Activated CD4-positive, alpha-beta T cell treated with anti-CD3 and anti-CD28 coated beads for 36 hours (primary cell): ENCODE measurements at regions of chr12 and their contacts with region 1.

Region 1: GRCh38 chr12:110280779-110281548 is at the start of gene ATP2A2:
- DNase-seq: peak; percentile 94
- ATAC-seq: peak; percentile 87
- H3K4me3 Mint-ChIP-seq: peak within 1 kb of the TSS; percentile 85
- H3K27ac Mint-ChIP-seq: peak within 1 kb of the TSS; percentile 86
- H3K4me1 Mint-ChIP-seq: peaks cover 40% of the 10 kb centered on the region
- H3K27me3 Mint-ChIP-seq: peaks cover 3% of the 10 kb centered on the region
- total RNA-seq, gene ATP2A2: 116 to 130 TPM

Region 2: GRCh38 chr12:109573029-109573913 is 707.7 kb before region 1 on chr12 and contains the starts of genes MMAB and MVK:
- CTCF ChIA-PET with region 1: no interaction called
- POLR2A ChIA-PET with region 1: no interaction called
- intact Hi-C with region 1: loop called in 1 of 2 experiments (anchors 2 kb)
- DNase-seq: peak; percentile 99
- ATAC-seq: peak; percentile 97
- H3K4me3 Mint-ChIP-seq: peak within 1 kb of the TSS; percentile 90
- H3K27ac Mint-ChIP-seq: peak within 1 kb of the TSS; percentile 96
- H3K4me1 Mint-ChIP-seq: peaks cover 23% of the 10 kb centered on the region
- H3K27me3 Mint-ChIP-seq: no peaks in the 10 kb centered on the region
- total RNA-seq, gene MMAB: 37.7 to 44.3 TPM
- total RNA-seq, gene MVK: 17.8 to 18.7 TPM

Region 3: DNA sequence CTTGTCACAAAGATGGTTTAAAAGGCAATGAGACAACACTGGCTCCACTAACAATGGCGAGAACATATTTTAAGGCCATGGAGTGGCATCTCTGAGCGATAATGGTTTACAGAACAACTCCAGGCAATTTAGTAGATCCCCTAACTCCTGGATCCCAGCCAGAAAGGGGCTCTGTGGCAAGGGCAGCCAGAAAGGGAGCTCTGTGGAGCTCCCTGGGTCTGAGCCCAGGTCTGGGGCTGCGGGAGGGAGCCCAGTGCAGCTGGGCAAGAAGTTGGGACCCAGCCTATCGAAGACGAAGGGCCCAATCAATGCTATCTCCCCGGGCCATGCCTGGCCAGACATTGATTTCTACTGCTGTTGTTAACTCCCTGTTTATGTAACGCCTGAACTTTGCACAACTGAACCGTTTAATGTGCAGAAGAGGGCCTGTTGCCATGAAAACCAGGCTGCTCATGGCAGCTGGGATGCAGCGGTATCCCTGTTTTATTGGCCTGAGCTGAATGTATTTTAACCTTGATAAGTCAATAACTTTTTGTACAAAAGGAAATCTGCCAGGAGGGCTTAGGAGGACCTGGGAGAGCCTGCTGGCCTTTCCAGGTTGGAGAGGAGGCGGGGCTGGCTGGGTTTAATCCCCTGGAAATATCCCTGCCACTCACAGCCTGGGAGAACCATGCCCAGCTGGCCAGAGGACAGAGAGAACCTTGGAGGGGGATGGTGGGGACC is 574.1 kb before region 1 on chr12:
- CTCF ChIA-PET with region 1: no interaction called
- POLR2A ChIA-PET with region 1: no interaction called
- intact Hi-C with region 1: no loop called
- DNase-seq: no peak
- ATAC-seq: no peak
- H3K4me3 Mint-ChIP-seq: no peak overlapping the region
- H3K27ac Mint-ChIP-seq: no peak overlapping the region
- H3K4me1 Mint-ChIP-seq: no peaks in the 10 kb centered on the region
- H3K27me3 Mint-ChIP-seq: peaks cover 21% of the 10 kb centered on the region

Region 4: GRCh38 chr12:110048242-110049027 is 232.5 kb before region 1 on chr12 and contains the start of gene C12orf76:
- CTCF ChIA-PET with region 1: interaction called, 3 read pairs
- POLR2A ChIA-PET with region 1: no interaction called
- intact Hi-C with region 1: loop called in 1 of 2 experiments (anchors 2 kb)
- DNase-seq: peak; percentile 95
- ATAC-seq: peak; percentile 100
- H3K4me3 Mint-ChIP-seq: peak within 1 kb of the TSS; percentile 78
- H3K27ac Mint-ChIP-seq: peak within 1 kb of the TSS; percentile 94
- H3K4me1 Mint-ChIP-seq: peaks cover 28% of the 10 kb centered on the region
- H3K27me3 Mint-ChIP-seq: no peaks in the 10 kb centered on the region
- total RNA-seq, gene C12orf76: 10.2 to 10.5 TPM

Region 5: GRCh38 chr12:110403146-110403975 is 122.4 kb after region 1 on chr12 and contains the start of gene ANAPC7:
- CTCF ChIA-PET with region 1: interaction called, 3 read pairs
- POLR2A ChIA-PET with region 1: no interaction called
- intact Hi-C with region 1: loop called (anchors 1 to 2 kb)
- DNase-seq: peak; percentile 93
- ATAC-seq: peak; percentile 94
- H3K4me3 Mint-ChIP-seq: peak within 1 kb of the TSS; percentile 88
- H3K27ac Mint-ChIP-seq: peak within 1 kb of the TSS; percentile 99
- H3K4me1 Mint-ChIP-seq: peaks cover 21% of the 10 kb centered on the region
- H3K27me3 Mint-ChIP-seq: no peaks in the 10 kb centered on the region
- total RNA-seq, gene ANAPC7: 52.6 to 63.6 TPM

Region 6: GRCh38 chr12:110501752-110502738 is 221.1 kb after region 1 on chr12 and contains the starts of genes RAD9B and VPS29:
- CTCF ChIA-PET with region 1: no interaction called
- POLR2A ChIA-PET with region 1: no interaction called
- intact Hi-C with region 1: loop called in 1 of 2 experiments (anchors 1 kb)
- DNase-seq: peak; percentile 100
- ATAC-seq: peak; percentile 97
- H3K4me3 Mint-ChIP-seq: peak within 1 kb of the TSS; percentile 95
- H3K27ac Mint-ChIP-seq: peak within 1 kb of the TSS; percentile 94
- H3K4me1 Mint-ChIP-seq: peaks cover 28% of the 10 kb centered on the region
- H3K27me3 Mint-ChIP-seq: no peaks in the 10 kb centered on the region
- total RNA-seq, gene RAD9B: 1.5 to 2.2 TPM
- total RNA-seq, gene VPS29: 84.4 to 103 TPM

Region 7: GRCh38 chr12:111093428-111094142 is 812.6 kb after region 1 on chr12:
- CTCF ChIA-PET with region 1: no interaction called
- POLR2A ChIA-PET with region 1: no interaction called
- intact Hi-C with region 1: no loop called
- DNase-seq: peak; percentile 61
- ATAC-seq: peak; percentile 90
- H3K4me3 Mint-ChIP-seq: no peak overlapping the region
- H3K27ac Mint-ChIP-seq: no peak overlapping the region
- H3K4me1 Mint-ChIP-seq: peaks cover 22% of the 10 kb centered on the region
- H3K27me3 Mint-ChIP-seq: no peaks in the 10 kb centered on the region

Region 8: GRCh38 chr12:111599459-111600204 is 1318.7 kb after region 1 on chr12:
- CTCF ChIA-PET with region 1: no interaction called
- POLR2A ChIA-PET with region 1: no interaction called
- intact Hi-C with region 1: loop called in 1 of 2 experiments (anchors 5 kb)
- DNase-seq: peak; percentile 91
- ATAC-seq: peak; percentile 83
- H3K4me3 Mint-ChIP-seq: peak overlapping the region; percentile 81
- H3K27ac Mint-ChIP-seq: peak overlapping the region; percentile 92
- H3K4me1 Mint-ChIP-seq: peaks cover 17% of the 10 kb centered on the region
- H3K27me3 Mint-ChIP-seq: no peaks in the 10 kb centered on the region